ENCODE measurements at regions of chr10 and their contacts with region 1.

Region 1: GRCh38 chr10:69451209-69451783 is at the start of gene TSPAN15:
- DNase-seq: peak; percentile 95
- ATAC-seq: peak; percentile 92
- H3K4me3 Mint-ChIP-seq: peak within 1 kb of the TSS; percentile 77
- H3K27ac Mint-ChIP-seq: no peak within 1 kb of the TSS
- H3K4me1 Mint-ChIP-seq: peaks cover 19% of the 10 kb centered on the region
- H3K27me3 Mint-ChIP-seq: peaks cover 70% of the 10 kb centered on the region
- CTCF ChIP-seq: no peak
- total RNA-seq, gene TSPAN15: 8.3 to 10.4 TPM (median 10.1 TPM) in 3 replicates

Region 2: GRCh38 chr10:69439813-69440506 is 11.3 kb before region 1 on chr10:
- CTCF ChIA-PET with region 1: interaction called, 12 read pairs
- POLR2A ChIA-PET with region 1: no interaction called
- DNase-seq: no peak
- ATAC-seq: peak; percentile 68
- H3K4me3 Mint-ChIP-seq: no peak overlapping the region
- H3K27ac Mint-ChIP-seq: no peak overlapping the region
- H3K4me1 Mint-ChIP-seq: peaks cover 6% of the 10 kb centered on the region; the same call in 1 of the 2 replicates
- H3K27me3 Mint-ChIP-seq: peaks cover 9% of the 10 kb centered on the region
- CTCF ChIP-seq: no peak

Region 3: GRCh38 chr10:69464801-69465401 is 13.6 kb after region 1 on chr10:
- CTCF ChIA-PET with region 1: interaction called, 55 read pairs
- POLR2A ChIA-PET with region 1: interaction called, 3 read pairs
- DNase-seq: no peak
- ATAC-seq: no peak; the same call in 1 of the 2 replicates
- H3K4me3 Mint-ChIP-seq: no peak overlapping the region
- H3K27ac Mint-ChIP-seq: no peak overlapping the region
- H3K4me1 Mint-ChIP-seq: peaks cover 19% of the 10 kb centered on the region
- H3K27me3 Mint-ChIP-seq: no peaks in the 10 kb centered on the region
- CTCF ChIP-seq: no peak

Region 4: DNA sequence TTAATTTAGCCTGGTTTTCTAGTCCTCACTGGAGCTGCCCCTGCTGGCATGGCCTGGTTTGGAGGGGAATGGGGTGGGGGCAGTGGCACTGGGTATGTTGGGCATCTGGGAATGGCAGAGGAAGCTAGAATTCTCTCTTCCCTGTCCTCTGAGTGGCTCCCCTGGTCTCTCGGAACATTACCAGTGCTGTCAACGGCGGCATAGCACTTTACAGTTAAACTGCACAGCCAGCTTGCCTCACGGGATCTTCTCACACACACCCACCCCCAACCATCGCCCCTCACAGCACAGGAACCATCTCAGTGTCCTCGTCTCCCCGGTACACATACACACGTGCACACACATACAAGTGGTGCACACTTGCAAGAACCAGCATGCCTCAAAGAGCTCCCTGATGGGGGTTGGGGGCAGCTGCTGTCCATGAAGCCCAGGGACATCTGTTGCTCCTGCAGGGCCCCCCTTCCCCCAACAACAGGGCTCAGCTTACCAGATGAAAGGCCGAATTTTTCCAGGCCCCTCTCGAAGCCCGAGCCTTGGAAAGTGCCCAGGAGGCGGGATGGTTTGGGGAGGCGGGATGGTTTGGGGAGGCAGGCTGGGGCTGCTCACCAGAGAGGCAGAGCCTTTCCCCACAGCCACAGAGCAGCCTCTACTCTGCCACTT is 40.9 kb after region 1 on chr10:
- CTCF ChIA-PET with region 1: interaction called, 12 read pairs
- POLR2A ChIA-PET with region 1: no interaction called
- DNase-seq: no peak
- ATAC-seq: no peak
- H3K4me3 Mint-ChIP-seq: no peak overlapping the region
- H3K27ac Mint-ChIP-seq: no peak overlapping the region
- H3K4me1 Mint-ChIP-seq: no peaks in the 10 kb centered on the region
- H3K27me3 Mint-ChIP-seq: peaks cover 14% of the 10 kb centered on the region; the same call in 1 of the 2 replicates
- CTCF ChIP-seq: no peak

Region 5: DNA sequence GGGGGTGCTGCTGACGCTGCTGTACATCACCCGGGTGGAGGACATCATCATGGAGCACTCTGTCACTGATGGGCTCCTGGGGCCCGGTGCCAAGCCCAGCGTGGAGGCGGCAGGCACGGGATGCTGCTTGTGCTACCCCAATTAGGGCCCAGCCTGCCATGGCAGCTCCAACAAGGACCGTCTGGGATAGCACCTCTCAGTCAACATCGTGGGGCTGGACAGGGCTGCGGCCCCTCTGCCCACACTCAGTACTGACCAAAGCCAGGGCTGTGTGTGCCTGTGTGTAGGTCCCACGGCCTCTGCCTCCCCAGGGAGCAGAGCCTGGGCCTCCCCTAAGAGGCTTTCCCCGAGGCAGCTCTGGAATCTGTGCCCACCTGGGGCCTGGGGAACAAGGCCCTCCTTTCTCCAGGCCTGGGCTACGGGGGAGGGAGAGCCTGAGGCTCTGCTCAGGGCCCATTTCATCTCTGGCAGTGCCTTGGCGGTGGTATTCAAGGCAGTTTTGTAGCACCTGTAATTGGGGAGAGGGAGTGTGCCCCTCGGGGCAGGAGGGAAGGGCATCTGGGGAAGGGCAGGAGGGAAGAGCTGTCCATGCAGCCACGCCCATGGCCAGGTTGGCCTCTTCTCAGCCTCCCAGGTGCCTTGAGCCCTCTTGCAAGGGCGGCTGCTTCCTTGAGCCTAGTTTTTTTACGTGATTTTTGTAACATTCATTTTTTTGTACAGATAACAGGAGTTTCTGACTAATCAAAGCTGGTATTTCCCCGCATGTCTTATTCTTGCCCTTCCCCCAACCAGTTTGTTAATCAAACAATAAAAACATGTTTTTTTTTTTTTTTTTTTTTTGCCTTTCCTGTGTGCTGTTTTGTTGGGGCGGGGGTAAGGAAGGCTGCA is 55.8 kb after region 1 on chr10:
- CTCF ChIA-PET with region 1: interaction called, 32 read pairs
- POLR2A ChIA-PET with region 1: no interaction called
- DNase-seq: peak; percentile 28
- ATAC-seq: peak; percentile 9; the same call in 1 of the 2 replicates
- H3K4me3 Mint-ChIP-seq: peak overlapping the region; percentile 31; the same call in 1 of the 2 replicates
- H3K27ac Mint-ChIP-seq: peak overlapping the region; percentile 43; the same call in 1 of the 2 replicates
- H3K4me1 Mint-ChIP-seq: peaks cover 16% of the 10 kb centered on the region
- H3K27me3 Mint-ChIP-seq: no peaks in the 10 kb centered on the region
- CTCF ChIP-seq: no peak

Region 6: GRCh38 chr10:69703766-69704638 is 252.7 kb after region 1 on chr10:
- CTCF ChIA-PET with region 1: no interaction called
- POLR2A ChIA-PET with region 1: no interaction called
- DNase-seq: no peak
- ATAC-seq: no peak
- H3K4me3 Mint-ChIP-seq: no peak overlapping the region
- H3K27ac Mint-ChIP-seq: no peak overlapping the region
- H3K4me1 Mint-ChIP-seq: 0 out of 2 replicates have a peak, but pooled peaks cover 5% of the 10 kb centered on the region
- H3K27me3 Mint-ChIP-seq: peaks cover 36% of the 10 kb centered on the region
- CTCF ChIP-seq: no peak

Measured in WTC11 (cell line).